GM10248 (cell line): ENCODE measurements at regions of chr18 and their contacts with region 1.

Region 1: GRCh38 chr18:59631583-59632181 is 65.5 kb downstream of the CCBE1 start:
- DNase-seq: peak; percentile 21
- CTCF ChIP-seq: peak; percentile 61

Region 2: DNA sequence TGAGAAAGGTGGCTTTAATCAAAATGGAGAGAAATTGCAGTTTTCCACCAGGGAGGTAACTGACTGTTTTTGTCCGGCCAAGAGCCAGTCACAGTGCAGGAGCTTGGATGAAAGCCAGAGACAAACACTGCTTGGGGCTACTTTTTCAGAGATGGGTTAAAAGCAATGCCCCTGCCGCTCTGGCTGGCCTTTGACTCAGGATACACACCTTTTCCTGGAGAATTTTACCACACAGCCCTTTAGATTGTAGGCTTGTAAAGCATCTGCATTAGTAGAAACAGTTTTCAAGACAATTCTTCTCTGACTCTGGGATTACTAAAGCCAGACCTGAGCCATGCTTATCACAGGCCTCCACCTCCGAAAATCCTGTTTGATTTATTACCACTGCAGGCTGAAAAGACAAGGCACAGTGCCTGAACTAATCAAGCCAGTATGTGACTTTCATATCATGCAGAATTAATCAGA is 14.2 kb before region 1 on chr18:
- CTCF ChIA-PET with region 1: interaction called, 16 read pairs
- POLR2A ChIA-PET with region 1: no interaction called
- DNase-seq: no peak
- CTCF ChIP-seq: no peak

Region 3: GRCh38 chr18:59646228-59646962 is 14.7 kb after region 1 on chr18:
- CTCF ChIA-PET with region 1: interaction called, 13 read pairs
- POLR2A ChIA-PET with region 1: no interaction called
- DNase-seq: no peak
- CTCF ChIP-seq: peak; percentile 16

Region 4: GRCh38 chr18:59660786-59661743 is 29.4 kb after region 1 on chr18:
- CTCF ChIA-PET with region 1: no interaction called
- POLR2A ChIA-PET with region 1: no interaction called
- DNase-seq: no peak
- CTCF ChIP-seq: no peak

Region 5: GRCh38 chr18:59695551-59695950 is 63.9 kb after region 1 on chr18:
- CTCF ChIA-PET with region 1: no interaction called
- POLR2A ChIA-PET with region 1: no interaction called
- DNase-seq: no peak
- CTCF ChIP-seq: no peak